Activated B cell treated with CpG ODN at 0.5 μM for 24 hours (primary cell): ENCODE measurements at regions of chr10 and their contacts with region 1.

Region 1: GRCh38 chr10:15824498-15824897 is 35.8 kb downstream of the MINDY3 start:
- DNase-seq: no peak
- ATAC-seq: no peak
- H3K4me3 Mint-ChIP-seq: no peak overlapping the region
- H3K27ac Mint-ChIP-seq: no peak overlapping the region
- H3K4me1 Mint-ChIP-seq: no peaks in the 10 kb centered on the region
- H3K27me3 Mint-ChIP-seq: no peaks in the 10 kb centered on the region
- CTCF ChIP-seq: no peak

Region 2: DNA sequence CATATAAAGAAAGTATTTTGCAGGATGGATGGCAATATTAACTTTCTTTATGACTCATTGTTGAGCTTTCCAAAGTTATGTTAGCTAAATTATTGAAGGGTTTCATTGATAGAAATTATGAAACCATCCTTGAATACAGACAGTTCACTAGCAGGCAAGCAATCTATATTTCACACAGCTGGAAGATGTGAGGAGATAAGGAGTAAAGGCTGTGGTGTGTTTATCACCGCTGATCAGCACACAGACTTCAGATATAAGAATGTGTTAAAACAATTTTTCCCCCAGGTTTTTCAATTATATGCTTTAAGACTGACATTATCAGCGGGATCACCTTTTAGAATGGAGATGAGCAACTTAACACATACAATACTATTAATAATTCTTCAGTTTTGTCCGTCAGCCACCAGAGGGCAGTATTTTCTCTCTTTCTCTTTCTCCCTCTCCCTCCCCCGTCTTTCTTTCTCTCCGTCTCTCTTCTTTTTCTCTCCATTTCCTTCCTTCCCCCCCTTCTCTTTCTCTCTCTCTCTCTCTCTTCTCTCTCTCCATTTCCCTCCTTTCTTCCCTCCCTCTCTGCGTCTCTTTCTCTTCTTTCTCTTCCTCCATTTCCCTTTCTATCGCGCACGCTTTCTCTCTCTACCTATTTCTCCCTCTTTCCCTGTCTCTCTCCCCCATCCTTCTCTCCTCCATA is 390.5 kb before region 1 on chr10:
- CTCF ChIA-PET with region 1: no interaction called
- POLR2A ChIA-PET with region 1: no interaction called
- intact Hi-C with region 1: loop called (anchors 2 kb)
- DNase-seq: no peak
- ATAC-seq: no peak
- H3K4me3 Mint-ChIP-seq: peak overlapping the region; percentile 60
- H3K27ac Mint-ChIP-seq: no peak overlapping the region
- H3K4me1 Mint-ChIP-seq: peaks cover 3% of the 10 kb centered on the region
- H3K27me3 Mint-ChIP-seq: peaks cover 3% of the 10 kb centered on the region
- CTCF ChIP-seq: peak; percentile 60